Naive thymus-derived CD4-positive, alpha-beta T cell (primary cell): ENCODE measurements at regions of chr3 and their contacts with region 1.

Region 1: GRCh38 chr3:150183678-150184425 is 213.2 kb upstream of the PFN2 start:
- DNase-seq: peak; percentile 14 to 57 (median 39)
- ATAC-seq: peak; percentile 83
- H3K4me3 ChIP-seq: no peak overlapping the region
- H3K4me3 Mint-ChIP-seq: no peak overlapping the region
- H3K27ac ChIP-seq: no peak overlapping the region
- H3K27ac Mint-ChIP-seq: no peak overlapping the region
- H3K4me1 ChIP-seq: peaks cover 0 to 4% of the 10 kb centered on the region in 2 donors
- H3K4me1 Mint-ChIP-seq: no peaks in the 10 kb centered on the region
- H3K27me3 ChIP-seq: no peaks in the 10 kb centered on the region
- H3K27me3 Mint-ChIP-seq: peaks cover 14 to 32% (median 14%) of the 10 kb centered on the region in 5 donors

Region 2: GRCh38 chr3:149765762-149766334 is 418.0 kb before region 1 on chr3:
- CTCF ChIA-PET with region 1: no interaction called
- POLR2A ChIA-PET with region 1: no interaction called
- intact Hi-C with region 1: loop called in 1 of 2 experiments (anchors 1 kb)
- DNase-seq: no peak
- ATAC-seq: no peak
- H3K4me3 ChIP-seq: no peak overlapping the region
- H3K4me3 Mint-ChIP-seq: no peak overlapping the region
- H3K27ac ChIP-seq: no peak overlapping the region
- H3K27ac Mint-ChIP-seq: no peak overlapping the region
- H3K4me1 ChIP-seq: no peaks in the 10 kb centered on the region
- H3K4me1 Mint-ChIP-seq: peaks cover 0 to 2% (median 0%) of the 10 kb centered on the region in 7 donors
- H3K27me3 ChIP-seq: no peaks in the 10 kb centered on the region
- H3K27me3 Mint-ChIP-seq: peaks cover 8 to 30% (median 16%) of the 10 kb centered on the region in 5 donors

Region 3: GRCh38 chr3:149936812-149937233 is 247.0 kb before region 1 on chr3:
- CTCF ChIA-PET with region 1: interaction called, 5 read pairs
- POLR2A ChIA-PET with region 1: no interaction called
- intact Hi-C with region 1: loop called (anchors 1 to 2 kb)
- DNase-seq: peak in 8 of 9 donors; percentile 3 to 31 (median 19)
- ATAC-seq: peak; percentile 62
- H3K4me3 ChIP-seq: no peak overlapping the region
- H3K4me3 Mint-ChIP-seq: no peak overlapping the region
- H3K27ac ChIP-seq: no peak overlapping the region
- H3K27ac Mint-ChIP-seq: peak overlapping the region in 1 of 9 donors; percentile 67
- H3K4me1 ChIP-seq: no peaks in the 10 kb centered on the region
- H3K4me1 Mint-ChIP-seq: peaks cover 12 to 46% (median 33%) of the 10 kb centered on the region in 7 donors
- H3K27me3 ChIP-seq: no peaks in the 10 kb centered on the region
- H3K27me3 Mint-ChIP-seq: no peaks in the 10 kb centered on the region

Region 4: GRCh38 chr3:149954812-149955211 is 229.0 kb before region 1 on chr3:
- CTCF ChIA-PET with region 1: no interaction called
- POLR2A ChIA-PET with region 1: no interaction called
- intact Hi-C with region 1: no loop called
- DNase-seq: no peak
- ATAC-seq: no peak
- H3K4me3 ChIP-seq: no peak overlapping the region
- H3K4me3 Mint-ChIP-seq: no peak overlapping the region
- H3K27ac ChIP-seq: no peak overlapping the region
- H3K27ac Mint-ChIP-seq: peak overlapping the region in 4 of 9 donors; percentile 5 to 81 (median 35)
- H3K4me1 ChIP-seq: peaks cover 0 to 8% of the 10 kb centered on the region in 2 donors
- H3K4me1 Mint-ChIP-seq: peaks cover 8 to 44% (median 26%) of the 10 kb centered on the region in 7 donors
- H3K27me3 ChIP-seq: no peaks in the 10 kb centered on the region
- H3K27me3 Mint-ChIP-seq: no peaks in the 10 kb centered on the region